Heart left ventricle (tissue), 16 donors: ENCODE measurements at regions of chr6 and their contacts with region 1.

Region 1: DNA sequence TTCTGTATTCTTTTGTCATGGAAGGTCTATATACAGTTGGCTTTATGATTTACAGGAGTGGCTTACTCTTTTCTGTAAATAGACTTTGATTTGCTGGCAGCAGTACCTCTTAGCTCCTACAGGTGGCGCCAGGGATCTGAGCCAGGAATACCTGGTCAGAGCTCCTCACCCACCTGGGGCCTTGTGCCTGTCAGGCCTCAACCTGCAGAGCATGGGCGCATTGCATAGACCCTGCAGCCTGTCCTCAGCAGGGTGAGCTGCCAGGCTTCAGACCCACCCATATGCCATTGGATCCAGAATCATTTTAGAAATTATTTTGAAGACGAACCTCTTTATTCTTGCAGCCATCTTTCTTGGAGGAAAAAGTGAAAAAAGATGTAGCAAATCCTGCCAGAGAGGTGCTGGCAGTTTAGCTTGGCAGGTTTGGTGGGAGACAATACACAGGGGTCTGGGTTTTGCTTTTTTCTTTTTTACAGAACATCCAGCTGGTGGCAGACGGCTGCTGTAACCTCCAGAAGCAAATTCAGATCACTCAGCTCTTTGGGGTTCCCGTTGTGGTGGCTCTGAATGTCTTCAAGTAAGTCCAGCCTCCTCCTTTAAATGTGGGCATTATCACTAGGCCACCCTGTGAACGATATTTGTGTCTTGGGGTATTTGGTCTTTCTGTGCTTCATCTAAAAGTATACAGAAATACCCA is 149.1 kb downstream of the MTHFD1L start:
- DNase-seq: peak; percentile 61 to 73 (median 70)
- ATAC-seq: peak; percentile 45 to 79 (median 76)
- H3K4me3 ChIP-seq: peak overlapping the region in 5 of 12 donors; percentile 13 to 33 (median 24)
- H3K27ac ChIP-seq: no peak overlapping the region
- H3K4me1 ChIP-seq: peaks cover 0 to 11% (median 0%) of the 10 kb centered on the region in 12 donors
- H3K27me3 ChIP-seq: no peaks in the 10 kb centered on the region
- CTCF ChIP-seq: peak; percentile 93 to 99 (median 98)
- POLR2A ChIP-seq: no peak

Region 2: GRCh38 chr6:150354754-150355571 is 659.6 kb before region 1 on chr6:
- intact Hi-C with region 1: no loop called
- DNase-seq: no peak
- ATAC-seq: no peak
- H3K4me3 ChIP-seq: no peak overlapping the region
- H3K27ac ChIP-seq: no peak overlapping the region
- H3K4me1 ChIP-seq: no peaks in the 10 kb centered on the region
- H3K27me3 ChIP-seq: no peaks in the 10 kb centered on the region
- CTCF ChIP-seq: no peak
- POLR2A ChIP-seq: no peak

Region 3: GRCh38 chr6:150622941-150623874 is 391.3 kb before region 1 on chr6:
- intact Hi-C with region 1: no loop called
- DNase-seq: no peak
- ATAC-seq: peak in 3 of 4 donors; percentile 46 to 90 (median 50)
- H3K4me3 ChIP-seq: no peak overlapping the region
- H3K27ac ChIP-seq: peak overlapping the region in 7 of 12 donors; percentile 1 to 58 (median 17)
- H3K4me1 ChIP-seq: peaks cover 0 to 67% (median 36%) of the 10 kb centered on the region in 12 donors
- H3K27me3 ChIP-seq: no peaks in the 10 kb centered on the region
- CTCF ChIP-seq: no peak
- POLR2A ChIP-seq: no peak

Region 4: DNA sequence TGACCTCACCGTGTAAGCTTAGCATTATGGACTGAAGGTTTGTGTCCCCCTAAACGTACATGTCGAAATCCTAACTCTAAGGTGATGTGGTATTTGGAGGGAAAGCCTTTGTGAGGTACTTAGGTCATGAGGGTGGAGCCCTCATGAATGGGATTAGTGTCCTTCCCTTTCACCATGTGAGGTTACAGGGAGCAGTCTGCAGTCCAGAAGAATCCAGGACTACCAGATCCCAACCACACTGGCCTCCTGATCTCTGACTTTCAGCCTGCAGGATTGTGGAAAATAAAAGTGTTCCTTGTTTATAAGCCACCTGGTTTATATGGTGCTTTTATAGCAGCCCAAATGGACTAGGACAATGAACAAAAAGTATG is 303.4 kb after region 1 on chr6:
- intact Hi-C with region 1: loop called in 1 of 10 experiments (anchors 2 kb)
- DNase-seq: no peak
- ATAC-seq: no peak
- H3K4me3 ChIP-seq: no peak overlapping the region
- H3K27ac ChIP-seq: peak overlapping the region in 1 of 12 donors; percentile 80
- H3K4me1 ChIP-seq: peaks cover 0 to 14% (median 0%) of the 10 kb centered on the region in 12 donors
- H3K27me3 ChIP-seq: no peaks in the 10 kb centered on the region
- CTCF ChIP-seq: no peak
- POLR2A ChIP-seq: no peak

Region 5: GRCh38 chr6:151323791-151324487 is 309.4 kb after region 1 on chr6:
- intact Hi-C with region 1: loop called (anchors 1 to 2 kb)
- DNase-seq: peak; percentile 80 to 88 (median 84)
- ATAC-seq: peak; percentile 85 to 94 (median 90)
- H3K4me3 ChIP-seq: no peak overlapping the region
- H3K27ac ChIP-seq: peak overlapping the region in 9 of 12 donors; percentile 20 to 83 (median 60)
- H3K4me1 ChIP-seq: peaks cover 0 to 30% (median 18%) of the 10 kb centered on the region in 12 donors
- H3K27me3 ChIP-seq: peaks cover 0 to 13% (median 0%) of the 10 kb centered on the region in 9 donors
- CTCF ChIP-seq: peak; percentile 96 to 99 (median 98)
- POLR2A ChIP-seq: no peak